PC-9 (cell line): ENCODE measurements at regions of chr11 and their contacts with region 1.

Region 1: GRCh38 chr11:36478700-36479329 is 31.3 kb downstream of the TRAF6 start:
- DNase-seq: peak; percentile 47 to 51
- H3K4me3 ChIP-seq: no peak overlapping the region
- H3K27ac ChIP-seq: no peak overlapping the region
- H3K4me1 ChIP-seq: 0 out of 2 replicates have a peak, but pooled peaks cover 3% of the 10 kb centered on the region
- H3K27me3 ChIP-seq: no peaks in the 10 kb centered on the region
- CTCF ChIP-seq: peak; percentile 88

Region 2: DNA sequence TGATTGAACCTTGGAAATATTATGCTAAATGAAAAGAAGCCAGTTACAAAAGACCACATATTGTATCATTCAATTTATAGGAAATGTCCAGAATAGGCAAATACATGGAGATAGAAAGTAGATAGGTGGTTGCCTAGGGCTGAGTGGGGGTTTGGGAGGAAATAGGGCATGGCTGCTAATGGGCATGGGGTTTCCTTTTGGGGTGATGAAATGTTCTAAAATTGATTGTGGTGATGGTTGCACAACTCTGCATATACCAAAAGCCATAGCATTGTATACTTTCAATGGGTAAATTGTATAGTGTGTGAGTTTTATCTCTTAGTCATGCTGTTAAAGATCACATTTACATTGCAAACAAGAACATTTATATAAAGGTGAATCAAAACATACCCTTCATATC is 486.3 kb before region 1 on chr11:
- CTCF ChIA-PET with region 1: no interaction called
- POLR2A ChIA-PET with region 1: no interaction called
- intact Hi-C with region 1: no loop called
- DNase-seq: no peak
- H3K4me3 ChIP-seq: no peak overlapping the region
- H3K27ac ChIP-seq: no peak overlapping the region
- H3K4me1 ChIP-seq: no peaks in the 10 kb centered on the region
- H3K27me3 ChIP-seq: no peaks in the 10 kb centered on the region
- CTCF ChIP-seq: no peak

Region 3: DNA sequence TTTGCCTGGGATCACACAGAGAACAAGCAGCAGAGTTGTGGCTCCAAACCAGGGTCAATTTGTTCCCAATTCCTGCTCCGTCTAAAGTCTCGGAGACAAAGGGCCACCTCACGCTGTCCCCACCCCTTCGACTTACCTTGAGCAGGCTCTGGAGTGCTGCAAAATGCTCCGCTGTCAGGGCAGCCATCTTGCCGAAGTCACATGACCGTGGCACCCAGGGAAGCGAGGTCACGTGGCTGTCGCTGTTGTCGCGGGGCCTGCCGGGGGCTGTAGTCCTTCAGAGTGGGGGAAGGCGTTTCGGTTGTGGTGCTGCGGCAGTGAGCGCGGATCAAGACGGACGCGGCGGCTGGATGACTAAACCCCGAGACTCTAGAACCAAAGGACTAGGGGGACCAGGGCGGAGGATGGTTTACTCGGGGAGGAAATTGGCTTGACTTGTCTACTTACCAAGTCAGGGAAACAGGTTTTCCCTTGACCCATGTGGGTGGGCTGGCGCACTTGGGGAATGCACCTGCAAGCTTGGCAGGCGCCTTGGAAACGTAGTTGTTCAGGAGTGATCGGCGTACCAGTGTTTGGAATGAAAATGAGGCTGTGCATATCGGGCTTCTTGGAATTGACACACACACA is 189.5 kb before region 1 on chr11 and contains the start of gene COMMD9:
- CTCF ChIA-PET with region 1: interaction called, 19 read pairs
- POLR2A ChIA-PET with region 1: no interaction called
- intact Hi-C with region 1: loop called (anchors 1 kb)
- DNase-seq: peak; percentile 92 to 94
- H3K4me3 ChIP-seq: peak within 1 kb of the TSS; percentile 63
- H3K27ac ChIP-seq: peak within 1 kb of the TSS; percentile 36; the same call in 1 of the 2 replicates
- H3K4me1 ChIP-seq: peaks cover 14% of the 10 kb centered on the region
- H3K27me3 ChIP-seq: no peaks in the 10 kb centered on the region
- CTCF ChIP-seq: no peak
- total RNA-seq, gene COMMD9: 56.5 and 77.5 TPM in 2 replicates

Region 4: GRCh38 chr11:36376888-36377758 is 101.7 kb before region 1 on chr11:
- CTCF ChIA-PET with region 1: interaction called, 3 read pairs
- POLR2A ChIA-PET with region 1: no interaction called
- intact Hi-C with region 1: loop called (anchors 1 kb)
- DNase-seq: peak in 1 of 2 experiments; percentile 9
- H3K4me3 ChIP-seq: peak overlapping the region; percentile 58
- H3K27ac ChIP-seq: no peak overlapping the region
- H3K4me1 ChIP-seq: no peaks in the 10 kb centered on the region
- H3K27me3 ChIP-seq: peaks cover 4% of the 10 kb centered on the region
- CTCF ChIP-seq: peak; percentile 43; the same call in 1 of the 2 replicates

Region 5: DNA sequence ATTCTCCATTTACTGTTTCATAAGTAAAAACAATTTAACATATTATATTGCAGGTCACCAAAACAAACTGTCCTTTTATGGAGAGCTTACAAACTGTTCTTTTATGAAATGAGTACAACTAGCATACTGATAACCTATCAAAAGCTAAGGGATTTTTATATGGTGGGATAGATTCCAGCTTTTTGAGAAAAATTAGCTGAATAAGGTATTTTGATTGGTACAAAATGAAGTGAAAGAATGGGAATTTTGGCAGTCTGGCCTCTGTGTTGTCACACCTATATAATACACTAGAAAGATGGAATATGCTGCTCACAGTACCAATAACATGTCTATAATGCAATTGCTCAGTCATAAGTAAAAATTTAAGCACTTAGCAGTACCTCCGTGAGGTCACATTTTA is 19.9 kb after region 1 on chr11:
- CTCF ChIA-PET with region 1: no interaction called
- POLR2A ChIA-PET with region 1: no interaction called
- intact Hi-C with region 1: no loop called
- DNase-seq: no peak
- H3K4me3 ChIP-seq: no peak overlapping the region
- H3K27ac ChIP-seq: no peak overlapping the region
- H3K4me1 ChIP-seq: no peaks in the 10 kb centered on the region
- H3K27me3 ChIP-seq: no peaks in the 10 kb centered on the region
- CTCF ChIP-seq: no peak